ENCODE measurements at regions of chr19 and their contacts with region 1.

Region 1: DNA sequence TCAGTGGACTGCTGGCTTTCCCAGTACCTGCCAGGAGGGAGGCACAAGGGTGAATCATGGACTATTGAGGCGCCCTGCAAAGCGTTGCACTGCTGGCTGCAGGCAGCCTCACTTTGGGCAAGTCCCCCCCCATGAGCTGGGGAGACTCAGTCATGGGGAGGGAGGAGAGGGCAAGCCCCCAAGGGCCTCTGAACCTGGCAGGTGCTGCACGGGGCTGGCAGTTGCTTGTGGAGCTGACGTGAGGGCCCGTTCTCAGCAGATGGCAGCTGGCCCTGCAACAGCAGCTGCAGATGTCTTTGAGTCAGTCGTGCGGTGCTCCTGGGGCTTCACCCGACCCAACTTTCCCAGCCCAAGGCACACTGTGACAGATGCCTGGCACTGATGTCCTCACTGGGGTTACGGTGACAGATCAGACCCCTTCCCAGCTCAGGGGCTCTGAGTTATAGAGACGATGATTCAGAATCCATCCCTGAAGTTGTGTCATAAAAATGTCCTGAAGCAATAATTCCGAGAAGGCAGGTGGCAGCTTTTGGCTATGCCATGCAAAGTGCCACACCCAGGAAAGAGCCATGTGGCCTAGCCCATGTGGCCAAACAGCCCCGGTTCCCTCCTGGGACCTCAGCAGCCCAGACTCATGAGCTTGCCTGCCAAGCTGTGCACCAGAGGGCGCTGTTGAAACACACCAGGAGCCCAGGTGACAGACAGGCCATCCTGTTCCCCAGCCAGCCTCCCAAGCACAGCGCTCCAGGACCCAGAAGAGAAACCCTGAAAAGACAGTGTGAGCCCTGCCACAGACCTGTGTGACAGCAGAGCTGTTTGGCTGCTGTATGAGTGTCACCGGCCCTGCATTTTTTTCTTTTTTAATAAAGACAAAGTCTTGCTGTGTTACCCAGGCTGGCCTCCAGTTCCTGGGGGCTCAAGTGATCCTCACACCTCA is 53.6 kb upstream of the LDLR start:
- DNase-seq: peak; percentile 91
- H3K4me3 Mint-ChIP-seq: no peak overlapping the region
- H3K27ac Mint-ChIP-seq: peak overlapping the region; percentile 29
- H3K4me1 Mint-ChIP-seq: peaks cover 15% of the 10 kb centered on the region
- H3K27me3 Mint-ChIP-seq: no peaks in the 10 kb centered on the region

Region 2: GRCh38 chr19:10936661-10937084 is 99.0 kb before region 1 on chr19:
- CTCF ChIA-PET with region 1: interaction called, 11 read pairs
- POLR2A ChIA-PET with region 1: no interaction called
- DNase-seq: peak; percentile 32
- H3K4me3 Mint-ChIP-seq: no peak overlapping the region
- H3K27ac Mint-ChIP-seq: no peak overlapping the region
- H3K4me1 Mint-ChIP-seq: peaks cover 12% of the 10 kb centered on the region
- H3K27me3 Mint-ChIP-seq: no peaks in the 10 kb centered on the region

Region 3: GRCh38 chr19:10952809-10953208 is 82.9 kb before region 1 on chr19:
- CTCF ChIA-PET with region 1: no interaction called
- POLR2A ChIA-PET with region 1: no interaction called
- DNase-seq: no peak
- H3K4me3 Mint-ChIP-seq: no peak overlapping the region
- H3K27ac Mint-ChIP-seq: no peak overlapping the region
- H3K4me1 Mint-ChIP-seq: peaks cover 2% of the 10 kb centered on the region
- H3K27me3 Mint-ChIP-seq: no peaks in the 10 kb centered on the region

Region 4: GRCh38 chr19:11090054-11090900 is 54.6 kb after region 1 on chr19:
- CTCF ChIA-PET with region 1: interaction called, 40 read pairs
- POLR2A ChIA-PET with region 1: interaction called, 38 read pairs
- DNase-seq: peak; percentile 98
- H3K4me3 Mint-ChIP-seq: peak overlapping the region; percentile 96
- H3K27ac Mint-ChIP-seq: peak overlapping the region; percentile 99
- H3K4me1 Mint-ChIP-seq: peaks cover 46% of the 10 kb centered on the region
- H3K27me3 Mint-ChIP-seq: no peaks in the 10 kb centered on the region

Region 5: GRCh38 chr19:11096210-11096841 is 60.6 kb after region 1 on chr19:
- CTCF ChIA-PET with region 1: interaction called, 40 read pairs
- POLR2A ChIA-PET with region 1: interaction called, 38 read pairs
- DNase-seq: peak; percentile 55
- H3K4me3 Mint-ChIP-seq: peak overlapping the region; percentile 72
- H3K27ac Mint-ChIP-seq: peak overlapping the region; percentile 92
- H3K4me1 Mint-ChIP-seq: peaks cover 68% of the 10 kb centered on the region
- H3K27me3 Mint-ChIP-seq: no peaks in the 10 kb centered on the region

Region 6: DNA sequence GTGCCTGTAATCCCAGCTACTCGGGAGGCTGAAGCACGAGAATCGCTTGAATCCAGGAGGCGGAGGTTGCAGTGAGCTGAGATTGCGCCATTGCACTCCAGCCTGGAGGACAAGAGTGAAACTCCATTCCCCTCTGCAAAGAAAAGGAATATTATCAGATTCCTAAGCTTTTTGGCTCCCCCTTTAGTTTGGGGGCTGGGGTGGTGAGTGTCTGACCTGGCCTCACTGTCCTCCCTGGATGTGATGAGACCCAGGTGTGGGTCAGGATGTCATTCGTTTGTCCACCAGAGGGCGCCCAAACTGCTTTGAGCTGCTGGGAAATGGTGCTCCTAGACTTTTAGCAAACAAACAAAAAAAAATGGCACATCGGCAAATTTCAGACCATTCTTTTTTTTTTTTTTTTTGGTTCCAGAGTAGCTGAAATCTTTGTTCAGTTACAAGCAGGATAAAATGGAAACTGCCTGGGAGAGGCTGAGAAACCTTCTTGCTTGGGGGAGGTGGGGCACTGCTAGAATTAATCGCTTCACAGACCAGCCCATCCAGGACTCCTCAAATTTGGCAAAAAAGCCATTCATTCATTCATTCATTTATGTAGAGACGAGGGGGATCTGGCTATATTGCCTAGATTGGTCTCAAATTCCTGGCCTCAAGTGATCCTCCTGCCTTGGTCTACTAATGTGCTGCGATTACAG is 90.4 kb after region 1 on chr19:
- CTCF ChIA-PET with region 1: interaction called, 49 read pairs
- POLR2A ChIA-PET with region 1: interaction called, 4 read pairs
- DNase-seq: peak; percentile 78
- H3K4me3 Mint-ChIP-seq: no peak overlapping the region
- H3K27ac Mint-ChIP-seq: no peak overlapping the region
- H3K4me1 Mint-ChIP-seq: peaks cover 6% of the 10 kb centered on the region
- H3K27me3 Mint-ChIP-seq: no peaks in the 10 kb centered on the region

Region 7: DNA sequence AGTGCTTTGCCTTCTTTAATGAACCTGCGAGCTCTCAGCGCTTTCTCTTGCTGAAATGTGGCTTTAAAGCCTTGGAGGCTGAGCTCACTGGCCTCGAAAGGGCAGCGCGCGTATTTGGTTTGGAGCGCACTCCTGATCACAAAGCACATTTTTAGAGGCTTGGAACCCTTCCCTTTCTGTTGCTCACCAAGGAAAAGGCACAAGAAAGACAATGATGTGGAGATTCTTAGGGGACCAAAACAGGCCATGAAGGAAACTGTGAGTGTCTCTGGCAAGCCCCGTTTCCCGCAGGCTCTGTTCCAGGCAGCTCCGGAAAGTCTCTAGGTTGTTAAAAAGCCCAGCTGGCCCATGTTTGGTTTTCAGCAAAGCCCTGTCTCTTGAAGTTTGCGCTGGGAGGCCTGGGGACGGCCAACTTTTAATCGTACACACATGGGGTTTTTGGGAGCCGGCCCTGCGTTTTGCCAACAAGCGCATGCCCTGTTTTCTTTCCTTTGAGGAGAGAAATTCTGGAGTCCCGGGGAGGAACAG is 129.2 kb after region 1 on chr19:
- CTCF ChIA-PET with region 1: no interaction called
- POLR2A ChIA-PET with region 1: no interaction called
- DNase-seq: no peak
- H3K4me3 Mint-ChIP-seq: no peak overlapping the region
- H3K27ac Mint-ChIP-seq: no peak overlapping the region
- H3K4me1 Mint-ChIP-seq: no peaks in the 10 kb centered on the region
- H3K27me3 Mint-ChIP-seq: peaks cover 3% of the 10 kb centered on the region

Region 8: DNA sequence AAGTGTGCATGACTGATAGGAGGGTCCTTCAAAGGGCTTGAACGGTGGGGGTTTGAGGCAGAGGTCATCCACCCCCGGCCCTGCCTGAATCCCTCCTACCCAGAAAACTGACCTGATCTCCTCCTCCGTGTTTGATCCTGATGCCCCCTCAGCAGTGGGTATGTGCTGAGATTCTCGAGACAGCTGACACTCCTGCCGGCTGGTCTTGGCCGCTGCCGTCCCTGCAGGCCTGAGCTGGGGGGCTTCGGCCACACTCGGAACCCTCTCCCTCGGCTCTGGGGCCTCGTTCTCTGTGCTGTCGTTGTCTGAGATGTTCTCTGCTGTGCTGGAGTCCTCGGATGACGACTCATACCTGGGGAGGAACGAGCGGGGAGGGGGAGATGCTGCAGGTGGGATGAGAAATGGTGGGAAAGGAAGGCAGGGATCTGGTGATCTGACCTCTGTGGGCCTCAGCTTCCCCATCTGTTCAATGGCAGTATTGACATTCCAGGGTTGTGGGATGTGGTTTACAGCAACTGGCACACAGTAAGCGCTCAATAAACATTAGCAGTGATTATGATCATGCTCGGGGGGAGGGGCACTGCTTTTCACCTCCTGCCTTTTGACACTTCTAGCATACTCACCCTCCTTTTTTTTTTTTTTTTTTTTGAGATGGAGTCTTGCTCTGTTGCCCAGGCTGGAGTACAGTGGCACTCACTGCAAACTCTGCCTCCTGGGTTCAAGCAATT is 140.9 kb after region 1 on chr19:
- CTCF ChIA-PET with region 1: no interaction called
- POLR2A ChIA-PET with region 1: no interaction called
- DNase-seq: no peak
- H3K4me3 Mint-ChIP-seq: no peak overlapping the region
- H3K27ac Mint-ChIP-seq: no peak overlapping the region
- H3K4me1 Mint-ChIP-seq: peaks cover 9% of the 10 kb centered on the region
- H3K27me3 Mint-ChIP-seq: peaks cover 4% of the 10 kb centered on the region

Region 9: GRCh38 chr19:11227201-11227886 is 191.6 kb after region 1 on chr19:
- CTCF ChIA-PET with region 1: no interaction called
- POLR2A ChIA-PET with region 1: no interaction called
- DNase-seq: no peak
- H3K4me3 Mint-ChIP-seq: no peak overlapping the region
- H3K27ac Mint-ChIP-seq: no peak overlapping the region
- H3K4me1 Mint-ChIP-seq: no peaks in the 10 kb centered on the region
- H3K27me3 Mint-ChIP-seq: no peaks in the 10 kb centered on the region